CD8-positive, alpha-beta T cell (primary cell): ENCODE measurements at regions of chr12 and their contacts with region 1.

Region 1: DNA sequence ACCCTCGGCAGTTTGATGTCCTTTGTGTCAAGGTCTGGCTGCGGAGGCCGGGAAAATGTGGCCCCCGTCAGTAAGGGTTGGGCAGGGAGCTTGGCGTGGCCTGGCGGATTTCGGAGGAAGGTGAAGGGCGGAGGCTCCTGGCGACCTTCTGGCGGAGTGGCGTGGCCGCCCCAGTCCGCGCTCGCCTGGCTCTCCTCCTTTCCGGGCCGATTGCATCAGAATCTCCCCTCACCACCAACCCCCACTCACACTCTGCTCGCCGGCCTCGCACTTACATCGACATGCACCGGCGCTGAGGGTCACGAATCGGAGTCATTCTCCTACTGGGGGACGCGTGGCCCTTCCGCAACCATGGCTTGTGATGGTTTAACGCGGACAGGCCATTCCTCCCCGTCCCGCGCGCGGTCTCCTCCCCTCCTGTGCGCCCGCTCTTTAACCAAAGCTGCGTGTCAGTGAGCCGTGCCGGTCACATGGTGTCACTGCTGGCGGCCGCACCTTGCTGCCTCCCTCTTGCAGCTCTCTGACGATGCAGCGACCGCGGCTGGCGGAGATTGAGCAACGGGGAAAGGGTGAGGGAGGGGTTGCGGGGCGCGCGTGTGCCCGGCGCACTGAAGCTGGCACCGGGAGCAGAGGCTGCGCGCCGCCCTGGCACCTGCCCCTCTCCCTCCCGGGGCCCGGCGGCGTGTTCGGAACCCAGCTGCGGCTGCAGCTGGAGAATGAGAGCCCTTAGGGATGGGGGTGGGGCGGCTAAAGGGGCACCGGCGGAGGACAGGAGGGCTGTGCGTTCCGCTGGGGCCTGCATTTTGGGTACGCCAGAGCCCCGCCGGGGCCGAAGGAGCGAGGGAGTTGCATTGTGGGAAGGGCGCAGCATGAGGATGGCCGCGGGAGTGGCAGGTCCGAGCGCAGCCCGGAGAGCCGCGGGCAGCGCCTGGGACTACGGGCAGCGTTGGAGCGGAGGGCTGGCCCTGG is at the start of gene SLC38A1:
- DNase-seq: peak; percentile 74 to 96 (median 91)
- ATAC-seq: peak; percentile 56
- H3K4me3 ChIP-seq: peak within 1 kb of the TSS; percentile 92 to 96
- H3K4me3 Mint-ChIP-seq: no peak within 1 kb of the TSS
- H3K27ac ChIP-seq: peak within 1 kb of the TSS; percentile 96 to 98
- H3K27ac Mint-ChIP-seq: no peak within 1 kb of the TSS
- H3K4me1 ChIP-seq: peaks cover 54% of the 10 kb centered on the region
- H3K4me1 Mint-ChIP-seq: peaks cover 41% of the 10 kb centered on the region
- H3K27me3 ChIP-seq: no peaks in the 10 kb centered on the region
- H3K27me3 Mint-ChIP-seq: no peaks in the 10 kb centered on the region
- CTCF ChIP-seq: no peak
- total RNA-seq, gene SLC38A1: 440 to 464 TPM

Region 2: DNA sequence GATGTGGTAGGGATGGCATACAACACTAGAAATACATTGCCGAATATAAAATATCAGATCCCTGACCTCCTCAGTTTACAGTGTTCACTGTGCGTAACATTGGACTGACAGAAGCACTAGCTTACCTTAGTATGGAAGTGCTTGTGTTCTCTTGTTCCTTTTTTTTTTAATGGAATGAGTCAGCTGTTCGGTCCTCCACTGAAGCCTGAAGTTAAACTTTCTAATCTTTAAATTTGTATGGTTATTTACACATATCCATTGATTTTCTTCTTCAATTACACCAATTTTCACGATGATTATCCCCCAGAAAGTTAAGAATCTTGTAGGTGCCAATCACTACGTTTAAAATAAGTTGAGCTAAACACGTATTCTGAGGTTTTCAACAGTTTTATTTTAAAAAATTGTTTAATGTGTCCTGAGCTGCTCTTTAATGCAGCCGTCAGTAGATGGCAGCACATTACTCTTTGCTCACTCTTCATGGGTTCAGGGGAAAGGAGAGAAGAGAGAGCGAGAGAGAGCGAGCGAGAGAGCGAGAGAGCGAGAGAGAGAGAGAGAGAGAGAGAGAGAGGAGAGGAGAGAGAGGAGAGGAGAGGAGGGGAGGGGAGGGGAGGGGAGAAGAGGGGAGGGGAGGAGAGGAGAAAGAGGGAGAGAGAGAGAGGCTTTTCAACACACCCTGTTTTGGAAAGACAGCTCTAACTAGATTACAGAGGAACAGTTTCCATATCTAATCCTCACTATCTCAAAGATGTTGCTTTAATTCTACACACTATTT is 143.8 kb before region 1 on chr12:
- CTCF ChIA-PET with region 1: interaction called, 8 read pairs
- POLR2A ChIA-PET with region 1: interaction called, 11 read pairs
- intact Hi-C with region 1: no loop called
- DNase-seq: peak; percentile 9 to 86 (median 53)
- ATAC-seq: peak; percentile 96
- H3K4me3 ChIP-seq: no peak overlapping the region
- H3K4me3 Mint-ChIP-seq: peak overlapping the region; percentile 7
- H3K27ac ChIP-seq: no peak overlapping the region
- H3K27ac Mint-ChIP-seq: peak overlapping the region; percentile 70
- H3K4me1 ChIP-seq: no peaks in the 10 kb centered on the region
- H3K4me1 Mint-ChIP-seq: peaks cover 4% of the 10 kb centered on the region
- H3K27me3 ChIP-seq: no peaks in the 10 kb centered on the region
- H3K27me3 Mint-ChIP-seq: peaks cover 7% of the 10 kb centered on the region
- CTCF ChIP-seq: peak; percentile 69

Region 3: DNA sequence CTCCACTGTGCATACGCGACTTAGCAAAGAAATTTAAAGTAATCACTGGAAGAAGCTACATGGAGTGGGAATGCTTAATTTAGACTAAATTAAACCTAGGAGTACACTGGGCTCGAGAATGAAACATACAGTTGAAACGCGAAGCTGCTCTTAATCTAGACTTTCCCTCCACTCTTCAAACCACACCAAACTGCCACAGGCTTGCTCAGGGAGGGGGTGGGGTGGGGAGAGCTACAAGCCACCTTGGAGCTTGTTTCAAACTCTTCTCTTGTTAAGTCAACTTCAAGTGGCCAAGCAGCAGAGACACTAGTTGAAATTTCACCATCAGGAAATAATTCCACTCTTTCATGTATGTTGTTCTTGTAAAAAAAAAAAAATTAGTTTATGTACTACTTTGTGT is 70.0 kb before region 1 on chr12:
- CTCF ChIA-PET with region 1: interaction called, 6 read pairs
- POLR2A ChIA-PET with region 1: interaction called, 29 read pairs
- intact Hi-C with region 1: no loop called
- DNase-seq: peak in 1 of 9 experiments; percentile 34
- ATAC-seq: no peak
- H3K4me3 ChIP-seq: no peak overlapping the region
- H3K4me3 Mint-ChIP-seq: no peak overlapping the region
- H3K27ac ChIP-seq: no peak overlapping the region
- H3K27ac Mint-ChIP-seq: peak overlapping the region; percentile 73
- H3K4me1 ChIP-seq: peaks cover 11% of the 10 kb centered on the region
- H3K4me1 Mint-ChIP-seq: peaks cover 38% of the 10 kb centered on the region
- H3K27me3 ChIP-seq: no peaks in the 10 kb centered on the region
- H3K27me3 Mint-ChIP-seq: no peaks in the 10 kb centered on the region
- CTCF ChIP-seq: no peak

Region 4: GRCh38 chr12:46217541-46218321 is 51.1 kb before region 1 on chr12:
- CTCF ChIA-PET with region 1: interaction called, 8 read pairs
- POLR2A ChIA-PET with region 1: interaction called, 232 read pairs
- intact Hi-C with region 1: loop called (anchors 1 kb)
- DNase-seq: peak in 8 of 9 experiments; percentile 44 to 88 (median 66)
- ATAC-seq: peak; percentile 11
- H3K4me3 ChIP-seq: peak overlapping the region; percentile 34 to 47
- H3K4me3 Mint-ChIP-seq: peak overlapping the region; percentile 79
- H3K27ac ChIP-seq: peak overlapping the region; percentile 83 to 92
- H3K27ac Mint-ChIP-seq: peak overlapping the region; percentile 98
- H3K4me1 ChIP-seq: peaks cover 98% of the 10 kb centered on the region
- H3K4me1 Mint-ChIP-seq: peaks cover 96% of the 10 kb centered on the region
- H3K27me3 ChIP-seq: no peaks in the 10 kb centered on the region
- H3K27me3 Mint-ChIP-seq: no peaks in the 10 kb centered on the region
- CTCF ChIP-seq: no peak

Region 5: DNA sequence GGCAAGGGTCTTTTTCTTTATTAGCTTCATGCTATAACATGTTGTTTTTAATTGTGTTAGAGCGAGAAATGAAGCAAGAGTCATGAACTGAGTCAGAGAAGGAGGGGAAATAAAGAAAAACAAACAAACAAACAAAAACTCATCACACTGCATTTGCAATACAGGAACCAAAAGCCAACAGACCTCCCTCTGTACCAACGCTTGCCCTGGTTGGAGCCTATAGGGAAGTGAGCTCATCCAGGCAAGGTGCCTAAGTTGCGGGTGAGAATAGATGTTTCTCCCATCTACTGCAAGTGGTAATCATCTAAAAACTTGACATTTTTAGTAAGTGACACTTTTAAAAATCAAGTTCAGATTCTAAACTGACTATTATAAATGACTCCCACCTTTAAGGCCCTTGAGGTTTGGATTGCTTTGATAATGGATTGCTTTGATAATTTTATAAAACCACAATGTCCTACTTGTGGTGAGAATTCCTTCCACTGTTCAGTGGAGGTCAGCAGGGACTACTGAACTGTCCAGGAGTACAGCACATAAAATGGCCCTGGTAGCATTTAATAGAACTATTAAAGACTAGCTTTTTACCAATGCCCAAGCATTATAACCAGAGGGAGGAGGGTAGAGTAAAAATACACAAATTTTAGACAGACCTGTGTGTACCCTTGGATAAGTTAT is 31.4 kb before region 1 on chr12:
- CTCF ChIA-PET with region 1: interaction called, 3 read pairs
- POLR2A ChIA-PET with region 1: interaction called, 15 read pairs
- intact Hi-C with region 1: no loop called
- DNase-seq: no peak
- ATAC-seq: no peak
- H3K4me3 ChIP-seq: no peak overlapping the region
- H3K4me3 Mint-ChIP-seq: peak overlapping the region; percentile 22
- H3K27ac ChIP-seq: peak overlapping the region in 1 of 2 experiments; percentile 3
- H3K27ac Mint-ChIP-seq: peak overlapping the region; percentile 83
- H3K4me1 ChIP-seq: peaks cover 61% of the 10 kb centered on the region
- H3K4me1 Mint-ChIP-seq: peaks cover 87% of the 10 kb centered on the region
- H3K27me3 ChIP-seq: no peaks in the 10 kb centered on the region
- H3K27me3 Mint-ChIP-seq: no peaks in the 10 kb centered on the region
- CTCF ChIP-seq: no peak

Region 6: GRCh38 chr12:46292755-46293402 is 24.0 kb after region 1 on chr12:
- CTCF ChIA-PET with region 1: interaction called, 3 read pairs
- POLR2A ChIA-PET with region 1: interaction called, 8 read pairs
- intact Hi-C with region 1: loop called in 1 of 2 experiments (anchors 2 kb)
- DNase-seq: no peak
- ATAC-seq: no peak
- H3K4me3 ChIP-seq: no peak overlapping the region
- H3K4me3 Mint-ChIP-seq: no peak overlapping the region
- H3K27ac ChIP-seq: no peak overlapping the region
- H3K27ac Mint-ChIP-seq: no peak overlapping the region
- H3K4me1 ChIP-seq: no peaks in the 10 kb centered on the region
- H3K4me1 Mint-ChIP-seq: no peaks in the 10 kb centered on the region
- H3K27me3 ChIP-seq: no peaks in the 10 kb centered on the region
- H3K27me3 Mint-ChIP-seq: no peaks in the 10 kb centered on the region
- CTCF ChIP-seq: no peak

Region 7: DNA sequence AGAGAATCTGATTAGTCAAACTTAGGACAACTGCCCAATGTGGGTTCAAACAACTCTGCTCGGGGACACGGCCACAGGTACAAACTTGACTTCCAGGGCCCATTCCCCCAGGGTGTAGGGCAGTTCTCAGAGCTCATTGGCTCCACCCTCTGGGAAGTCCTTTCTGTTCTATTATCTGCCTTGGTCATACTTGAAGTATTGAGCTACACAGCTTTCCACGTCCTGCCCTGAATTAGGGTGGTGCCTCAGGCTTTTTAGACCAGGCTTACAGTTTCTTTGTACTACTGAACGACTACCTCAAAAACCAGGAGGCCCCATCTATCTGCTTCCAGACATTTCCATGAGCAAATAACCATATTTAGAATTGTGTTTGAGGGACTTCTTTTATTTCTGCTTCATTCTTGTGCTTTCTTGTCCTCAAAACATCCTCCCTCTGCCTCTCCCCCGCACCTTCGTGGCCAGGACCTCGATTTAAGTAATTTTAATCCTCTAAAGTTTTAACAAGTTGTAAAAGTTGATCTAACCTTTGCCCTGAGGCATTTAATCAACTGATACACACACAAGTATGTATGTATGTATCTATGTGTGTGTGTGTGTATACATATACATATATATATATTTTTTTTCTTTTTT is 1092.6 kb after region 1 on chr12:
- CTCF ChIA-PET with region 1: no interaction called
- POLR2A ChIA-PET with region 1: no interaction called
- intact Hi-C with region 1: loop called in 1 of 2 experiments (anchors 2 kb)
- DNase-seq: peak in 7 of 9 experiments; percentile 19 to 76 (median 48)
- ATAC-seq: peak; percentile 42
- H3K4me3 ChIP-seq: peak overlapping the region; percentile 36 to 40
- H3K4me3 Mint-ChIP-seq: peak overlapping the region; percentile 79
- H3K27ac ChIP-seq: peak overlapping the region; percentile 64 to 94
- H3K27ac Mint-ChIP-seq: peak overlapping the region; percentile 96
- H3K4me1 ChIP-seq: peaks cover 71% of the 10 kb centered on the region
- H3K4me1 Mint-ChIP-seq: peaks cover 59% of the 10 kb centered on the region
- H3K27me3 ChIP-seq: no peaks in the 10 kb centered on the region
- H3K27me3 Mint-ChIP-seq: no peaks in the 10 kb centered on the region
- CTCF ChIP-seq: no peak